ENCODE measurements at regions of chr5 and their contacts with region 1.

Region 1: GRCh38 chr5:71974165-71974564 is 133.1 kb upstream of the MAP1B start:
- DNase-seq: no peak
- H3K4me3 ChIP-seq: no peak overlapping the region
- H3K27ac ChIP-seq: no peak overlapping the region
- H3K4me1 ChIP-seq: peaks cover 5% of the 10 kb centered on the region
- H3K27me3 ChIP-seq: no peaks in the 10 kb centered on the region
- CTCF ChIP-seq: no peak

Region 2: GRCh38 chr5:72005671-72006070 is 31.5 kb after region 1 on chr5:
- CTCF ChIA-PET with region 1: no interaction called
- dilution Hi-C with region 1: loop called (anchors 5 kb)
- in situ Hi-C with region 1: no loop called
- intact Hi-C with region 1: no loop called
- DNase-seq: no peak
- H3K4me3 ChIP-seq: no peak overlapping the region
- H3K27ac ChIP-seq: no peak overlapping the region
- H3K4me1 ChIP-seq: no peaks in the 10 kb centered on the region
- H3K27me3 ChIP-seq: no peaks in the 10 kb centered on the region
- CTCF ChIP-seq: no peak

Region 3: DNA sequence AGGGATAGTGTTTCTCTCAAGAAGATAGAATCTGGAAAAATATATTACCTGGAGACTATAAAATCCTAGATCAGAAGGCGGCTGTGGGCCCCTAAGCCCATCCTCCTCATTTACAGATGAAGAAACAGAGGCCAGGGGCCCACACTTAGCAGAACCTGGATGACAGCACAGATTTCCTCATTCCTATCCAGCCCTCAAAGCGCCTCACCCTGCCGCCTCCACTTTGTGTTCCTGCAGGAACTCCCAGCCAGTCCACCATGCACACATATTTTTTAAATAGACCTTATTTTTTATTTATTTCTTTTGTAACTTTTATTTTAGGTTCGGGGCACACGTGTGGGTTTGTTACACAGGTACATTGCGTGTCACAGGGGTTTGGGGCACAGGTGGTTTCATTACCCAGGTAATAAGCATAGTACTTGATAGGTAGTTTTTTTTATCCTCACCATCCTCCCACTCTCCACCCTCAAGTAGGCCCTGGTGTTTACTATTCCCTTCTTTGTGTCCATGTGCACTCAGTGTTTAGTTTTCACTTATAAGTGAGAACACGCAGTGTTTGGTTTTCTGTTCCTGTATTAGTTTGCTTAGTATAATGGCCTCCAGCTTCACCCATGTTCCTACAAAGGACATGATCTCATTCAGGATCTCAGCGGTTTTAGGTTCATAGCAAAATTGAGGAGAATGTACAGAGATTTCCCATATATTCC is 47.6 kb after region 1 on chr5:
- CTCF ChIA-PET with region 1: no interaction called
- dilution Hi-C with region 1: no loop called
- in situ Hi-C with region 1: no loop called
- intact Hi-C with region 1: no loop called
- DNase-seq: no peak
- H3K4me3 ChIP-seq: no peak overlapping the region
- H3K27ac ChIP-seq: no peak overlapping the region
- H3K4me1 ChIP-seq: no peaks in the 10 kb centered on the region
- H3K27me3 ChIP-seq: no peaks in the 10 kb centered on the region
- CTCF ChIP-seq: no peak

Measured in mammary epithelial cell (primary cell).